ENCODE measurements at regions of chr7 and their contacts with region 1.

Region 1: GRCh38 chr7:137898839-137899721 is 52.3 kb upstream of the DGKI start:
- DNase-seq: peak; percentile 62
- H3K4me3 Mint-ChIP-seq: peak overlapping the region; percentile 8
- H3K27ac Mint-ChIP-seq: peak overlapping the region; percentile 37
- H3K4me1 Mint-ChIP-seq: peaks cover 47% of the 10 kb centered on the region
- H3K27me3 Mint-ChIP-seq: no peaks in the 10 kb centered on the region

Region 2: DNA sequence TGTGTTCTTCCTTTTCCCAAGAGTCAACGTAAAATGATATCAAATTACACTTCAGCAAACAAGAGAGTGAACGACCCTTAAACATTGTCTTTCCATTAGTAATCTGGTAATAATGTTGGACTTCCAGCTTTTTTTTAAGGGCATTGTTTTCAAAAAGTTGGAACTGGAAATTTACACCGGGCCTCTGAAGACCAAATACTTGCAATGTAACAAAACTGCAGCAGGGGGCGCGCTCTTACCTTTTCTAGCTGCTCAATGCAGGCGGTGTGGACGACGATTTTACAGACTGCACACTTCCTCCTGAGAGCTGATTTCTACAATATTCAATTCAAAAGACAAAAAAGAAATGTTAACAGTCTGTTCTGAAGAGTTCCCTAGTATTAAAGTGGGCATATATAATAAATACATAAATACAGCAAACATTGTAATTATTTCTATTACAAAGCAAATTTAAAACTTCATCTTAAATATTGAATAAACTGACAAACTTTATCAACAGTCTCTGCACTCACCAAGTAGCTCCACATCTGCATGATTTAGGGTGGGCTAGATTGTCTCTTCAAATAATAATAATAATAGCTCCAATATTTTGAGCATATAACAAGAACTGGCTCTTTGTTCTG is 242.7 kb before region 1 on chr7:
- intact Hi-C with region 1: loop called (anchors 1 kb)
- DNase-seq: peak; percentile 35
- H3K4me3 Mint-ChIP-seq: no peak overlapping the region
- H3K27ac Mint-ChIP-seq: no peak overlapping the region
- H3K4me1 Mint-ChIP-seq: no peaks in the 10 kb centered on the region
- H3K27me3 Mint-ChIP-seq: peaks cover 2% of the 10 kb centered on the region

Region 3: DNA sequence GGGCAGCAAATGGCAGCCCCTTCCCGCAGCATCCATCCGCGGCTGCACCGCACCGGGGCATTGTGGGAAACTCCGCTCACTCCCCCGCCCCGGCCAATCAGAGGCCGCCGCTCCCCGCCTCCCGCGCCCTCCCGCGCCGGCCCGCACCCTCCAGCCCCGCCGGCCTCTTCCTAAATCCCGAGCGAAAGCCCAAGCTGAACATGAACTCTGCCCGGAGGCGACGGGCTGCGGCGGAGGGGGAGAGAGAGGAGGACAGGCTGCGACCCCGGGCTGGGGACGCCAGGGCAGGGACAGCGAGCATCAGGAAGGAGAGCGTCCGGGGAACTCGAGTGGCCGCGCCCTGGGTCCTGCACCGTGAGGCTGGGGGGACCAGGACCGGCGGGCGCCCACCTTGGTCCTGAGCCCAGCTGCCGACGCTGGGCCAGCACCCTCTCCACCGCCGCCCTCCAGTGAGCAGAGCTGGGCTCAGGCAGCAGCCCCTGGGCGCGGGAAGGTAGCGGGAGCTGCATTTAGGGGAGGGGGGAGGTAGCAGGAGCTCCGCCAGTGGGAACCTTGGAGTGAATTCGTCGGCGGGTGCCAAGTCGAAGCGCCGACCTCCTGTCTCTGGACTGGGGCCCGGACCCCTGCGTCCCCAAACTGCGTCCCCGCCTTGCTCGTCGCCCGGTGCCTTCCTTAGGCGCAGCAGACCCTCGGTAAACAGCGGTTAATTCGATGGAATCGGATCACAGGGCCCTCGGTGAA is 52.1 kb before region 1 on chr7 and contains the start of gene DGKI:
- intact Hi-C with region 1: loop called (anchors 1 kb)
- DNase-seq: peak; percentile 14
- H3K4me3 Mint-ChIP-seq: peak within 1 kb of the TSS; percentile 74
- H3K27ac Mint-ChIP-seq: no peak within 1 kb of the TSS
- H3K4me1 Mint-ChIP-seq: peaks cover 7% of the 10 kb centered on the region
- H3K27me3 Mint-ChIP-seq: peaks cover 40% of the 10 kb centered on the region
- total RNA-seq, gene DGKI: 27.3 and 30.2 TPM in 2 replicates

Region 4: GRCh38 chr7:137934941-137935883 is 36.1 kb after region 1 on chr7:
- intact Hi-C with region 1: loop called (anchors 1 kb)
- DNase-seq: no peak
- H3K4me3 Mint-ChIP-seq: peak overlapping the region; percentile 81
- H3K27ac Mint-ChIP-seq: peak overlapping the region; percentile 89
- H3K4me1 Mint-ChIP-seq: peaks cover 40% of the 10 kb centered on the region
- H3K27me3 Mint-ChIP-seq: no peaks in the 10 kb centered on the region

Region 5: DNA sequence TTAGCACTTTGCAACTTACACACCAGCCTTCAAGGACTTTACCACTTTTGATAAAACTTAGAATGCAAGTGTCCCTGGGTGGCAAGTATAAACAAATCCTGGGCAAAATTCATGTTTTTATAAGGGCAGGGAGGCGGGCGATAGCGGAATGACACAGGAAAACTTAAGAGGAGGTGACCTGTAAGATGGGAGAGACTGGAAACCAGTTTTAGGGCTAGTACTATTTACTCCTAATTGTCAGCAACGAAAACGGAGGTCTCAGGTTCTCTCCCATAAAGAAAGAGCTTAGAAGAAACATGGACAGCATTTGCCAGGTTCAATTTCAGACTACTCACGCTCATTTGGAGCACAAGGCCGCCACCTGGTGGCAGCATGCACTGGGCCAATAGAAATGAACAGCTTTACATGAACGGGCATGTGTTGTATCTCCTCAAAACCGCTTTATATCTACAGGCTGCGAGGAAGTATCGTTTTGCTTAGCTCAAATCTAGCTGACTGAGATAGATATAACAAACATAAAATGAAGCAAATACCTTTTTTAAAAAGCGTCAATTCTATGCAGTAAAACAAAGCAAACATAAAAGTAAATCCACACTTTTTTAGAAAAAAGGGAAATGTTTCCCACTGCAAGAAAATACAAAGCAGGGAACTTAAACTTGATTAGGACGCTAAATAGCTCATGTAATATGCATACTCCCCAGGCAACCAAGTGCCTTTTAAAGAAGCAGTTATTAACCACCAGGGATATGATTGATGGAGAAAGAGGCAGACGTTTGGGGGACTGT is 839.7 kb after region 1 on chr7:
- intact Hi-C with region 1: loop called (anchors 1 kb)
- DNase-seq: peak; percentile 72
- H3K4me3 Mint-ChIP-seq: no peak overlapping the region
- H3K27ac Mint-ChIP-seq: no peak overlapping the region
- H3K4me1 Mint-ChIP-seq: peaks cover 6% of the 10 kb centered on the region
- H3K27me3 Mint-ChIP-seq: no peaks in the 10 kb centered on the region

Region 6: GRCh38 chr7:139218173-139218572 is 1319.1 kb after region 1 on chr7:
- intact Hi-C with region 1: no loop called
- DNase-seq: no peak
- H3K4me3 Mint-ChIP-seq: no peak overlapping the region
- H3K27ac Mint-ChIP-seq: no peak overlapping the region
- H3K4me1 Mint-ChIP-seq: no peaks in the 10 kb centered on the region
- H3K27me3 Mint-ChIP-seq: peaks cover 12% of the 10 kb centered on the region

Measured in activated T-helper 1 cell treated with anti-CD3 and anti-CD28 coated beads, Interleukin-12 subunit alpha, Interleukin-12 subunit beta, Interleukin-2, Interleukin-4 antibody, amounts not matched to agents 30 ng/mL and 10 ng/mL and 1 ng/mL, durations not matched to agents 14 hours and 24 hours and 36 hours (primary cell).